Heart right ventricle (tissue), 16 donors: ENCODE measurements at regions of chr15 and their contacts with region 1.

Region 1: DNA sequence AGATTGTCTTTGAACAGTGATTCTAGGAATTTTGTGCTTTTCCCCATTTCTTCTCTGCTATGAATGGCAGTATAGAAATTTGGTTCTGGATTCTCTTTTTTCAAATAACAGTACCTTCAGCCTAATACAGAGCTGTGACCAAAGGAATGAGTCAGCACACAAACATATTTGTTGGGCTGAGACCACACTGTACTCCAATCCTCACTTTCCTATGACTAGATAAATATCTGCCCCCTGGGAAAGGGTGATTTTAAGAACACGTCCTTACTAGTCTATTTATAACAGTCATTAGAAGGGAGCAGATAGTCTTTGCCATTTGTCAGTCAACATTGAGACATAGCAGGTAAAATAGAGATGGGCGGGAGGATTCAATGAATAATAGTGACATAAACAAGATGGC is 461.3 kb downstream of the MCTP2 start:
- DNase-seq: no peak
- ATAC-seq: no peak
- H3K4me3 ChIP-seq: no peak overlapping the region
- H3K27ac ChIP-seq: no peak overlapping the region
- H3K4me1 ChIP-seq: no peaks in the 10 kb centered on the region
- H3K27me3 ChIP-seq: no peaks in the 10 kb centered on the region
- CTCF ChIP-seq: no peak

Region 2: DNA sequence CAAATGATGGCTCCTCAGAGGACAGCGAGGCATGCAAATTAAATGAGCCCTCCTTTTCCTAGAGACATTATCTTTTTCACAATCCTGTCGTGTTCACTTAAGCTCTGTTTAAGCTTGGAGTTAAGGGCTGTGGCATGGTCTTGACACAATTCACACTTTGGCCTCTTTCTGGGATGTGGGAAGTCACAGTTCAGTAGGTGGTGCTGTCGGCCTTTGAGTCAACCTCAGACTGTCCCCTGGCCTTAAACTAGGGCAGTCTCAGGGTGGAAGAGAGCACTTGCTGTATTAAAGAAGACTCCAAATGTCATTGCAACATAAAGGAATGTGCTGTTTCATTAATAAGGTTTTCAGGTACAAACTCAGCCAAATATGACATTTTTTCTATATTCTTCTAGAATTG is 110.3 kb before region 1 on chr15:
- intact Hi-C with region 1: loop called in 1 of 10 experiments (anchors 5 kb)
- DNase-seq: peak in 1 of 2 donors; percentile 30
- ATAC-seq: peak in 7 of 8 donors; percentile 55 to 82 (median 73)
- H3K4me3 ChIP-seq: no peak overlapping the region
- H3K27ac ChIP-seq: no peak overlapping the region
- H3K4me1 ChIP-seq: peaks cover 0 to 17% (median 3%) of the 10 kb centered on the region in 9 donors
- H3K27me3 ChIP-seq: peaks cover 0 to 76% (median 0%) of the 10 kb centered on the region in 7 donors
- CTCF ChIP-seq: peak in 8 of 9 donors; percentile 26 to 64 (median 48)